Activated T-helper 1 cell treated with anti-CD3 and anti-CD28 coated beads, Interleukin-12 subunit alpha, Interleukin-12 subunit beta, Interleukin-2, Interleukin-4 antibody, amounts not matched to agents 30 ng/mL and 10 ng/mL and 1 ng/mL, durations not matched to agents 14 hours and 24 hours and 36 hours (primary cell): ENCODE measurements at regions of chrX and their contacts with region 1.

Region 1: GRCh38 chrX:2811271-2811670 is 17.5 kb upstream of the GYG2 start:
- DNase-seq: no peak
- H3K4me3 Mint-ChIP-seq: no peak overlapping the region
- H3K27ac Mint-ChIP-seq: no peak overlapping the region
- H3K4me1 Mint-ChIP-seq: no peaks in the 10 kb centered on the region
- H3K27me3 Mint-ChIP-seq: no peaks in the 10 kb centered on the region

Region 2: DNA sequence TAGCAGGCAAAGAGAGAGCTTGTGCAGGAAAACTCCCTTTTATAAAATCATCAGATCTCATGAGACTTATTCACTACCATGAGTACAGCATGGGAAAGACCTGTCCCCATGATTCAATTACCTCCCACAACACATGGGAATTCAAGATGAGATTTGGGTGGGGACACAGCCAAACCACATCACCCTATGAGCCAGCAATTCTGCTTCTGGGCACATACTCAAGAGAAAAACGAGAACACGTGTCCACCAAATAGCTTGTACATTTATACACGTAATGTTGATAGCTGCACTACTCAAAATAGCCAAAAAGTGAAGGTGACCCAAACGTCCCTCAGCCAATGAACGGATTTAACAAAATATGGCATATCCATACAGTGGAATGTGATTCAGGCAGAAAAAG is 216.0 kb before region 1 on chrX:
- intact Hi-C with region 1: no loop called
- DNase-seq: no peak
- H3K4me3 Mint-ChIP-seq: no peak overlapping the region
- H3K27ac Mint-ChIP-seq: no peak overlapping the region
- H3K4me1 Mint-ChIP-seq: peaks cover 18% of the 10 kb centered on the region
- H3K27me3 Mint-ChIP-seq: no peaks in the 10 kb centered on the region

Region 3: DNA sequence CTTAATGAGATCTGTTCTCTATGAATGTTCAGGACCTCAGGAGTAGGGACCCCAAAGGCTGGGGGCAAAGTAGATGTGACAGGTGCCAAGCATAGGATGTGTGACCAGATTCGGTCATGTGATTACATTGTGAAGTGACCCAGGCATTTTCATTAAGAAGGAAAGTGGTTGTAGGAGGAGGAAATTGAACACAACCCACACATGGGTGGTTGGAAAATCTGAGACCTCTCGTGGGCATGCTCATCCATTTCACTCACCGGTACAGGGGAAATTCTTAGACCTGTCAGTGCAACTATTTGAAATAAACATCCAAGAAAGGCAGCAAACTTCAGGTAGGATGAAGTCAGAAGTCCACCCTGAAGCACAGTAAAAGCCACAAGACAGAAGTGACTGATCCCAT is 163.6 kb before region 1 on chrX:
- intact Hi-C with region 1: loop called (anchors 1 kb)
- DNase-seq: no peak
- H3K4me3 Mint-ChIP-seq: peak overlapping the region; percentile 57
- H3K27ac Mint-ChIP-seq: peak overlapping the region; percentile 79
- H3K4me1 Mint-ChIP-seq: peaks cover 25% of the 10 kb centered on the region
- H3K27me3 Mint-ChIP-seq: no peaks in the 10 kb centered on the region